ENCODE measurements at regions of chr15 and their contacts with region 1.

Region 1: GRCh38 chr15:77504306-77504705 is 83.6 kb downstream of the HMG20A start:
- DNase-seq: no peak
- H3K4me3 ChIP-seq: no peak overlapping the region
- H3K4me3 Mint-ChIP-seq: no peak overlapping the region
- H3K27ac Mint-ChIP-seq: peak overlapping the region; percentile 80
- H3K4me1 ChIP-seq: peaks cover 17% of the 10 kb centered on the region
- H3K4me1 Mint-ChIP-seq: peaks cover 29% of the 10 kb centered on the region
- H3K27me3 ChIP-seq: no peaks in the 10 kb centered on the region
- H3K27me3 Mint-ChIP-seq: no peaks in the 10 kb centered on the region
- CTCF ChIP-seq: no peak

Region 2: DNA sequence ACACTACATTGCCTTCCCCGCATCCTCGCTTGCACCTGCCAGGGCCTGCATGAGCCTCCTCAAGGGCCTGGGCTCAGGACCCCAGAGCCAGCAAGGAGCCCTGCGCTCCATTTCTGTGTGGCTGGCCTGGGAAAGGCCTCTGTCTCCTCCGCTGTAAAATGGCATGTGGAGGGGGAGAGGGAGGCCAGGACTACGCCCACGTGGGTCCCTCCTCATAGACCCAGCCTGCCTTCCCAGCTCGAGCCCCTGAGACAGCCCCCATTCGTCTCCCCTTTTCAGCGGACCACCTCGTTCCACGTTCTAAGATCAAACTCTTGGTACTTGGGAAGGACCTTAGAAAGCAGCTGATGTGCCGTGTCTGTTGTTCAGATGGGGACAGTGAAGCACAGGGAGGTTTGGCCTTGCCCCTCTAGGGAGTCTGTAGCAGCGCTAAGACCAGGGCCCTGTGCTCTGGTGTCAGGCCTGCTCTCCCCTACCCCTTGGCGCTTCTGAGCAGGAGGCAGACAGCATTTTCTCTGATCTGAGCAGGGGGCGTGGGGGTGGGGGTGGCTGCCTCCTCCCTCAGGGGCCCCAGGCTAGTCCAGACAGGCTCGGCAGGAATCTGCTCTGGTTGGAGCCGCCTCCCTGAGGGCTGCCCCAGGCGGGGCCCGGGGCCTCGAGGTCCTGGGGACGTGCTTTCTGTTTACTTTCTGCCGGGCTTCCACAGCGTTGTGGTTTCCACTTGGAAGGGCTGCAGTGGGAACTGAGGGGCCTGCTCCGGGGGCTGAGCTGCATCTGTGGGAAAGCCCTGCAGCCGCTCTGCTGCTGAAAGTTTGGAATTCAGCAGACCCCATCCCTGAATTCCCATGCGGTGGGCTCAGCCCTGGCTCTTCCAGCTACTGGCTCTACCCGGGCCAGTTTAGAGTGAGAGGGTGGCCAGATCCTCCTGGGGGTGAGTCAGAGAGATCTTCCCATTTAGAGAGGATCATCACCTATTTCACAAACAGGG is 22.8 kb after region 1 on chr15:
- CTCF ChIA-PET with region 1: no interaction called
- POLR2A ChIA-PET with region 1: no interaction called
- intact Hi-C with region 1: loop called (anchors 2 kb)
- DNase-seq: peak; percentile 84 to 90
- H3K4me3 ChIP-seq: no peak overlapping the region
- H3K4me3 Mint-ChIP-seq: peak overlapping the region; percentile 31
- H3K27ac Mint-ChIP-seq: peak overlapping the region; percentile 48
- H3K4me1 ChIP-seq: peaks cover 50% of the 10 kb centered on the region
- H3K4me1 Mint-ChIP-seq: peaks cover 34% of the 10 kb centered on the region
- H3K27me3 ChIP-seq: no peaks in the 10 kb centered on the region
- H3K27me3 Mint-ChIP-seq: no peaks in the 10 kb centered on the region
- CTCF ChIP-seq: no peak

Region 3: GRCh38 chr15:77617476-77618230 is 113.3 kb after region 1 on chr15:
- CTCF ChIA-PET with region 1: no interaction called
- POLR2A ChIA-PET with region 1: no interaction called
- intact Hi-C with region 1: no loop called
- DNase-seq: peak in 1 of 2 experiments; percentile 41
- H3K4me3 ChIP-seq: no peak overlapping the region
- H3K4me3 Mint-ChIP-seq: no peak overlapping the region
- H3K27ac Mint-ChIP-seq: no peak overlapping the region
- H3K4me1 ChIP-seq: peaks cover 11% of the 10 kb centered on the region
- H3K4me1 Mint-ChIP-seq: peaks cover 7% of the 10 kb centered on the region
- H3K27me3 ChIP-seq: no peaks in the 10 kb centered on the region
- H3K27me3 Mint-ChIP-seq: no peaks in the 10 kb centered on the region
- CTCF ChIP-seq: peak; percentile 28 to 55

Measured in Caco-2 (cell line).